ENCODE measurements at regions of chr1 and their contacts with region 1.

Region 1: DNA sequence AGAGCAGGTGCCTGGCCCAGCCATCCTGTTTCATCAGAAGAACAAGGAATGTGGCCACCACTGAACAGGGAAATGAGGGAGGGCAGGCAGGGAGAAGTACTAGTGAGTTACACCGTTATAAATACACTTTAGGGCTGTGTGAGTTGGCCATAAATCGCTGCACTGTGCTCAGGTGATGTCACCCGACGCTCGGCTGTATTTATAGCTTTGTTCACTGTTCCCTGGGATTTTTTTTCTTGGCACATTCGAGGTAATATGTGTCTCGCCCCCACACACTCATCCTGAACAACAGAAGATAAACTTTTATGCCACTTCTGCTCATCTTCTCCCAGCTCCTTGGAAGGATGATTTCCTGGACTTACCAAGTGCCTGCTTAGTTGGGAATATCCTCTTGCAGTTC is 9.0 kb upstream of the KIRREL1 start:
- DNase-seq: no peak
- H3K4me3 ChIP-seq: no peak overlapping the region
- H3K27ac ChIP-seq: no peak overlapping the region
- H3K4me1 ChIP-seq: no peaks in the 10 kb centered on the region
- H3K27me3 ChIP-seq: no peaks in the 10 kb centered on the region
- CTCF ChIP-seq: no peak
- EP300 ChIP-seq: no peak
- POLR2A ChIP-seq: no peak

Region 2: DNA sequence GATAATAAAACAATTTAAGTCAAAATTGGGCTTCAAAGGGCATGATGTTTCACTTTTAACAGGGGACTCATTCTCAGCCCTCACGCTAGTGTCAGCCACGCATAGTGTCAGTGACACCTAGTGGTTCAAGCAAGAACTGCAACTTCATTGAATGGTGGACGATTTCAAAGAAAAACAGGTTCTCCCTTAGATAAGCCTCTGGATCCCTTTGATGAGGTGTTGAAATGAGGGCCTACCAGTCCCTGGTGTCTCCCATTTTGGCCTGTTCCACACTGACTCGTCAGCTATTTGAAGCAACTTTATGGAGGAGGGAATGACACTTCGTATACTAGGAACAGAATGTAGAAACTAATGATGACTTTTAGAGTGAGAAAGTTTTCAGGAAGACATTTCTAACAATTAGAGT is 488.3 kb before region 1 on chr1:
- intact Hi-C with region 1: no loop called
- DNase-seq: no peak
- H3K4me3 ChIP-seq: no peak overlapping the region
- H3K27ac ChIP-seq: no peak overlapping the region
- H3K4me1 ChIP-seq: no peaks in the 10 kb centered on the region
- H3K27me3 ChIP-seq: no peaks in the 10 kb centered on the region
- CTCF ChIP-seq: peak in 1 of 3 donors; percentile 28
- EP300 ChIP-seq: no peak
- POLR2A ChIP-seq: no peak

Region 3: DNA sequence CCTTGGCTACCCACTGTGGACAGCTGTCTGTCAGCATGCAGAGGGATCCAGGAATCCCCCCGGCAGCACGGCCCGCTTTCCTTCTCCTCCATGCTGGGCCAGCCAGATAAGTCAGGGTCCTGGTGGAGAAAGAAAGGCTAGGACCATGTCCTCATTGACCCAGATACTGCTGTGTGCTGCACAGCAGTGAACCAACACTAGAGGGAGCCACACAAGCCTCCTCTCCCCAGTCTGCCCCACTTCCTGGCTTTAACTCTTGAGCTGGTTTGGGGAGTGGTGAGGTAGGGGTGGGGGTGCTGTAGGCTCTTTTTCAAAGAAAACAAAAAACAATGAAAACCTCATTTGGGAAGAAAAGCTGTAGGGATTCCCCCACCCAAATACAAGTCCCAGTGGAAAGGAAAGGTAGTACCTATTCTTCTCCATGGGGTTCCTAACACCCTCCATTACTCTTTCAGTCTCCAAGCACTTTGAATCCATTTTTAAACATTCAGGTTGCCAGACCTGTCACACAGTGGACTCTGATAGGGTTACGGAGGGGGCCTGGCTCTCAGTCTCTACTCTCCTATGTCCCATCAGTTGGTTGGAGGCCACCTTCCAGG is 111.4 kb after region 1 on chr1:
- intact Hi-C with region 1: loop called in 1 of 4 experiments (anchors 10 kb)
- DNase-seq: no peak
- H3K4me3 ChIP-seq: no peak overlapping the region
- H3K27ac ChIP-seq: no peak overlapping the region
- H3K4me1 ChIP-seq: peaks cover 10% of the 10 kb centered on the region
- H3K27me3 ChIP-seq: no peaks in the 10 kb centered on the region
- CTCF ChIP-seq: peak in 2 of 3 donors; percentile 15 to 18
- EP300 ChIP-seq: no peak
- POLR2A ChIP-seq: no peak

Region 4: GRCh38 chr1:158117854-158118704 is 133.6 kb after region 1 on chr1:
- intact Hi-C with region 1: loop called in 1 of 4 experiments (anchors 5 kb)
- DNase-seq: peak; percentile 44 to 71 (median 53)
- H3K4me3 ChIP-seq: peak overlapping the region; percentile 12
- H3K27ac ChIP-seq: no peak overlapping the region
- H3K4me1 ChIP-seq: peaks cover 2% of the 10 kb centered on the region
- H3K27me3 ChIP-seq: no peaks in the 10 kb centered on the region
- CTCF ChIP-seq: peak in 2 of 3 donors; percentile 21 to 37
- EP300 ChIP-seq: no peak
- POLR2A ChIP-seq: no peak

Region 5: GRCh38 chr1:158177700-158178450 is 193.4 kb after region 1 on chr1:
- intact Hi-C with region 1: no loop called
- DNase-seq: peak; percentile 35 to 81 (median 61)
- H3K4me3 ChIP-seq: peak overlapping the region; percentile 40
- H3K27ac ChIP-seq: no peak overlapping the region
- H3K4me1 ChIP-seq: peaks cover 2% of the 10 kb centered on the region
- H3K27me3 ChIP-seq: no peaks in the 10 kb centered on the region
- CTCF ChIP-seq: no peak
- EP300 ChIP-seq: no peak
- POLR2A ChIP-seq: no peak

Region 6: DNA sequence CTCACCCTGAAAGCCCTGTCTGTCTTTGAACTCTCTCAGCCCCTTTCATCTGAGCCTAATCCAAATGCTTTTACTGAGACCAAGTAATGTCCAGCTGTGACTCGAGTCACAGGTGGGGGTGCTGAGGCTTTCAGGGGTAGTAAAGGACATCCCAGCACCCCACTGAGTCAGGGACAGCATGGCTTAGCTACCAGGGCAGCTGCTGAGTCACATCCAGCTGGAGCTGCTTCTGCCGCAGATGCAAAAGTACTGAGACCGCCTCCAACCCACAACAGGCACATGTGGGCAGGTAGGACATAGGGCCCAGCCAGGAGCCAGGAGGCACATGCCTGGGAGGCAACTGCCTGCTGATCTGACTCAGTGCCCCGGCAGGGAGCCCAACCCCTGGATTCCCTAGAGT is 1884.7 kb after region 1 on chr1:
- intact Hi-C with region 1: no loop called
- DNase-seq: peak in 1 of 5 donors; percentile 28
- H3K4me3 ChIP-seq: no peak overlapping the region
- H3K27ac ChIP-seq: no peak overlapping the region
- H3K4me1 ChIP-seq: peaks cover 4% of the 10 kb centered on the region
- H3K27me3 ChIP-seq: no peaks in the 10 kb centered on the region
- CTCF ChIP-seq: no peak
- EP300 ChIP-seq: no peak
- POLR2A ChIP-seq: no peak